ENCODE measurements at regions of chr5 and their contacts with region 1.

Region 1: DNA sequence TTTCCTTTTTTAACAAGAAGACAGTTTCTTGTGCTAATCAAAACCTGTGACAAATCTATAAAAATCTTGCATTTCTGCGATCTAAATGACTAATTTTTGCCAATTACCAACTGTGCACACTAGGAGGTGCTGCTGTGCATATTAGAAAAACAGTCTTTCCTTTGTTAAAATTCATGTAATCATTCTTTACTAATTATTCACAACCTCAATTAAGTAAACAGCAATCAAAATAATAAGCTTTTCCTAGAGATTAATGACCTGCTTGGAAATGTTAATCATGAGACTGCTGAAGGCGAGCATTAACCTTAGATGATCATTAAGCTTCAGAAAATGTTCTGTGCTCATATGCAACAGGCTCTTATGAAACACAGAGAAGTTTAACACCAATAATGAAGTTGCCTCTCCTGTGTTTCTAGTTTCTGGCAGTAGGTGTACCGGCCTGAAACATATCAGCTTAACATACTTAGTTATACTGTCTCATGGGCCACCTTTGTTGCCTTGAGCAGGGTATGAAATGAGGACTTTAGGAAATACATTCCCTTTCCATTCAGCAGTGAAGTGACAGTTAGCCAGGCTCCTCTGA is 17.7 kb downstream of the RFESD start:
- DNase-seq: no peak
- H3K4me3 Mint-ChIP-seq: no peak overlapping the region
- H3K27ac Mint-ChIP-seq: no peak overlapping the region
- H3K4me1 Mint-ChIP-seq: peaks cover 1% of the 10 kb centered on the region
- H3K27me3 Mint-ChIP-seq: no peaks in the 10 kb centered on the region

Region 2: DNA sequence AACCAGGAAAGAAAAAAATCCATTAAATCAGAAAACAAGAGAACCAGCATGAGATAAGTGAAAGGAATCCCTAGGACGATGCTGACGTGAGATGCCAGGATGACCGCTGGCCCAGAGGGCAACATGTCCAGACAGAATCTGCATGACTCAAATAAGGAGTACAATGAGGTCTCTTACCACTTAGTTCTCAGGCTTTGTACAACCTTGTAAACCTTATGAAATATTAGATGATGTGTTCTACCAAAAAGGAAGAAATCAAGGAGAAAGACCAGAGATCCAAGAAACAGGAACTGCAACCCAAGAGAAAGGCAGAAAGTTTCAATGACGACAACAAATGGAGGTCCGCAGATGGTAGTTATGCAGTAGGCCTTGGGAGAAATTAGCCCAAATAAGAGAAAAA is 47.2 kb before region 1 on chr5:
- CTCF ChIA-PET with region 1: no interaction called
- POLR2A ChIA-PET with region 1: no interaction called
- intact Hi-C with region 1: no loop called
- DNase-seq: no peak
- H3K4me3 Mint-ChIP-seq: no peak overlapping the region
- H3K27ac Mint-ChIP-seq: no peak overlapping the region
- H3K4me1 Mint-ChIP-seq: peaks cover 53% of the 10 kb centered on the region
- H3K27me3 Mint-ChIP-seq: no peaks in the 10 kb centered on the region

Region 3: DNA sequence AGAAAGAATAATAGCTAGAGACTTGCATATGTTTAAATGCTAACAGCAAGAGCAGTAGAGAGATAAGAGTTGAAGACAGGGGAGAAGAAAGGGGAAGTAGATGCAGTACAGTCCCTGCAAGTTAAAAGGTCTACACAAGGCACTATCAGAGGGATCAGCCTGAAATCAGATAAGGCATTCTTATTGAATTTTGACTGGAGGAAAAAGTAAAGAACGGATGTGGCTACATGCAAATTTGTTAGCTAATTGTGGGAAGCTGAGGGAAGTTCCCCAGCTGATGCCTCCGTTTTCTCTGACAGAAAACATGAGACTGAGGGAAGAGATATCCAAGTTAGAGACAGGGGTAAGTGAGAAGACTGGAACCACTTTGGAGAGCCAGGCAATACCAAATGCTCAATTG is 53.9 kb after region 1 on chr5:
- CTCF ChIA-PET with region 1: interaction called, 5 read pairs
- POLR2A ChIA-PET with region 1: no interaction called
- intact Hi-C with region 1: loop called (anchors 2 kb)
- DNase-seq: peak; percentile 35
- H3K4me3 Mint-ChIP-seq: no peak overlapping the region
- H3K27ac Mint-ChIP-seq: no peak overlapping the region
- H3K4me1 Mint-ChIP-seq: peaks cover 16% of the 10 kb centered on the region
- H3K27me3 Mint-ChIP-seq: peaks cover 7% of the 10 kb centered on the region

Region 4: GRCh38 chr5:95760273-95761191 is 96.2 kb after region 1 on chr5:
- CTCF ChIA-PET with region 1: interaction called, 5 read pairs
- POLR2A ChIA-PET with region 1: no interaction called
- intact Hi-C with region 1: loop called (anchors 5 kb)
- DNase-seq: no peak
- H3K4me3 Mint-ChIP-seq: peak overlapping the region; percentile 57
- H3K27ac Mint-ChIP-seq: peak overlapping the region; percentile 64
- H3K4me1 Mint-ChIP-seq: peaks cover 23% of the 10 kb centered on the region
- H3K27me3 Mint-ChIP-seq: peaks cover 4% of the 10 kb centered on the region